ENCODE measurements at regions of chr4 and their contacts with region 1.

Region 1: DNA sequence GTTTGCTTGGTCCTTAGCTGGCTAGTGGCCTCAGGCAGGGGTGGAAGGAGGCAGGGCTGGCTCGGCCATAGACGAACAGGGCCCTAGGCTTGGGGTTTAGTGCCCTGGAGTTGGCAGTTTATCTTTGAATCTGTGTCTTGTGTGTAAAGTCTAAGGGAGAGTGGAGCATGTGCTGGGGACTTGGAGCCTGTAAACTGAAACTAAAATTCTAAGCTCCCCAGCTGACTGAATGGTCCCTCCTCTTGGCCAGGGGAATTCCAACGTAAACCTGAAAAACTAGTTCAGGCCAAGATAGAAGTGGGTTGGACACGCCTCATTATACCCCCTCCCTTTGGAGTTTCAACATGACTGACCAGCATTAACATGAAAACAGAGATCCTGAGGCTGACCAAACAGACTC is 46.1 kb upstream of the GPR78 start:
- DNase-seq: peak; percentile 86 to 87
- H3K4me3 ChIP-seq: peak overlapping the region; percentile 2
- H3K4me3 Mint-ChIP-seq: peak overlapping the region; percentile 65
- H3K27ac Mint-ChIP-seq: peak overlapping the region; percentile 78
- H3K4me1 ChIP-seq: peaks cover 39% of the 10 kb centered on the region
- H3K4me1 Mint-ChIP-seq: peaks cover 36% of the 10 kb centered on the region
- H3K27me3 ChIP-seq: no peaks in the 10 kb centered on the region
- H3K27me3 Mint-ChIP-seq: no peaks in the 10 kb centered on the region
- CTCF ChIP-seq: no peak

Region 2: GRCh38 chr4:8428293-8429097 is 105.6 kb before region 1 on chr4:
- CTCF ChIA-PET with region 1: no interaction called
- POLR2A ChIA-PET with region 1: no interaction called
- intact Hi-C with region 1: no loop called
- DNase-seq: peak; percentile 87 to 95
- H3K4me3 ChIP-seq: peak overlapping the region; percentile 60
- H3K4me3 Mint-ChIP-seq: peak overlapping the region; percentile 77
- H3K27ac Mint-ChIP-seq: peak overlapping the region; percentile 91
- H3K4me1 ChIP-seq: peaks cover 5% of the 10 kb centered on the region; the same call in 1 of the 2 replicates
- H3K4me1 Mint-ChIP-seq: peaks cover 10% of the 10 kb centered on the region
- H3K27me3 ChIP-seq: no peaks in the 10 kb centered on the region
- H3K27me3 Mint-ChIP-seq: no peaks in the 10 kb centered on the region
- CTCF ChIP-seq: peak; percentile 34 to 42

Region 3: DNA sequence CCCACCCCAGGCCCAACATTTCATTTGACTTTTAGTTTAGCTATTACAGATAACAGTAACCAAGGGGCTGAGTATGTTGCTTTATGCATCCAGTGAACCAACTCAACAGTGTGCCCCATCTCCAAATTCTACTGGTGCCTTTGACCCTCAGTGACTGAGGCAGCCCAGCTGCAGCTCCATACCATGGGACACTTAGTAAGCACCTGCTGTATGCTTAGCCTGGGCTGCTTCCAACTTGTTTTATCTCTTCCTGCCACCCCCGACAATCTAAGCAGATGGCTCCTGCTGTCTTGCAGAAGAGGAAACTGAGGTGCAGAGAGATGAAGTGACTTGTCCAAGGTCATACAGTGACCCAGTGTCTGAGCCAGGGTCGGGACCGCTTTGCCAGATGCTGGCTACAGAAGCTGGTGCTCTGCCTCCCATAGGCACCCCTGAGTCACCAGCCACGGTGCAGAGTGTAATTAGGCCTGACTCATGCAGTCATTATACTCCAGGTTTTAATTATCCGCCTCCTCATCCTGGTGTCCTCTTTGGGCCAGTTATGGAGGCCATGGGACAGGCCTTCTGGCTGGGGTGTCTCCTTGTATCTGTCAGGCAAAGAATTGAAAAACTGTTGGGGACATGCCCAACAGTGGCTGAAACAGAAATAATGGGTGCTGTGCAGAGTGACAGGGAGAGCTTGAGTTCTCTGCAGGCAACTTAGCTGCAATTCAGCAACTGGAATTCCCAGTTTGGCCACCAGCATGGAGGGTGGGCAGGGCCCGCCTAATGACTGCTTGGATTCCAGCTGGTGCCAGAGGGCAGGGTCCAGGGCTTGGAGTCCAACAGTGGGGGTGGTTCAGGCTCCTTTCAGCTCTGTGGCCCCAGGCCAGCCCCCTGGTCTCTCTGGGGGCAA is 37.8 kb after region 1 on chr4:
- CTCF ChIA-PET with region 1: no interaction called
- POLR2A ChIA-PET with region 1: no interaction called
- intact Hi-C with region 1: loop called (anchors 5 kb)
- DNase-seq: peak; percentile 59 to 69
- H3K4me3 ChIP-seq: no peak overlapping the region
- H3K4me3 Mint-ChIP-seq: no peak overlapping the region
- H3K27ac Mint-ChIP-seq: no peak overlapping the region
- H3K4me1 ChIP-seq: peaks cover 15% of the 10 kb centered on the region
- H3K4me1 Mint-ChIP-seq: peaks cover 20% of the 10 kb centered on the region
- H3K27me3 ChIP-seq: no peaks in the 10 kb centered on the region
- H3K27me3 Mint-ChIP-seq: peaks cover 2% of the 10 kb centered on the region
- CTCF ChIP-seq: no peak

Region 4: DNA sequence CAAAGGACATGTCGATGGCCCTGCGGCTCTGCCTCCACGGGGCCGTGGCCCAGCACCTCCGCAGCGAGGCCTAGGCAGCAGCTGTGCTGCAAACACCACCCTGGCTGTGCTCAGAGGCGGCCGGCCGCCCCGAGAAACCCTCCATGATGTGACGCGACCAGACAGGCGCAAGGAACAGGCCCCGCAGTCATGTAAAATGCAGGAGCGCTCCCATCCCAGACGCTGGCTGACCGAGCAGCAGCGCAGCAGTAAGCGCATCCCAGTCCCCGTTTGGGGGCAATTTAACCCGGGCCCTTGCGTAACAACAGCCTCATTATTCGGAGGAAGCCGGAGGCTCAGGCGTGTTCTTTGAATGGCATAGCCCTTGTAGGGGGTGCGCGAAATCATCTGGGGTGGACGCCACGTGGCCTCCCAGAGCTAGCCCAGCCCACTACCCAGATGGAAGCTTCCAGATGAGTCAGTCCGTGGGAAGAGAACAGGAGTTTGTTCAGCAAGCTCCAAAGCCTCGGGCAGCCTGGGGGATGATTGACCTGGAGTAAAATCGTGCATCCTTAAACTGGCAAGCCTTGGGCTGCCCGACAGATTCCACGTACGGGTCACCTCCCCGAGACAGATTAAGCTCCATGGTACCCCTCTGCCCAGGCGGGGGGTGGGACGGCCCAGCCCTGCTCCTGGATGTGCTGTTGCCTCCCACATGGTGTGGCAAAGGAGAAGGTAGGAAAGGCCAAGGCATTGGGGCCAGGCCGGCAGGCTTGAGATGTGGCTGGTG is 213.5 kb after region 1 on chr4:
- CTCF ChIA-PET with region 1: no interaction called
- POLR2A ChIA-PET with region 1: no interaction called
- intact Hi-C with region 1: no loop called
- DNase-seq: peak in 1 of 2 experiments; percentile 10
- H3K4me3 ChIP-seq: no peak overlapping the region
- H3K4me3 Mint-ChIP-seq: no peak overlapping the region
- H3K27ac Mint-ChIP-seq: no peak overlapping the region
- H3K4me1 ChIP-seq: no peaks in the 10 kb centered on the region
- H3K4me1 Mint-ChIP-seq: no peaks in the 10 kb centered on the region
- H3K27me3 ChIP-seq: no peaks in the 10 kb centered on the region
- H3K27me3 Mint-ChIP-seq: peaks cover 13% of the 10 kb centered on the region
- CTCF ChIP-seq: no peak